ENCODE measurements at regions of chr14 and their contacts with region 1.

Region 1: GRCh38 chr14:102774391-102775153 is 2.7 kb upstream of the TRAF3 start:
- DNase-seq: peak; percentile 81
- H3K4me3 Mint-ChIP-seq: peak overlapping the region; percentile 41
- H3K27ac Mint-ChIP-seq: peak overlapping the region; percentile 86
- H3K4me1 Mint-ChIP-seq: peaks cover 31% of the 10 kb centered on the region
- H3K27me3 Mint-ChIP-seq: no peaks in the 10 kb centered on the region

Region 2: DNA sequence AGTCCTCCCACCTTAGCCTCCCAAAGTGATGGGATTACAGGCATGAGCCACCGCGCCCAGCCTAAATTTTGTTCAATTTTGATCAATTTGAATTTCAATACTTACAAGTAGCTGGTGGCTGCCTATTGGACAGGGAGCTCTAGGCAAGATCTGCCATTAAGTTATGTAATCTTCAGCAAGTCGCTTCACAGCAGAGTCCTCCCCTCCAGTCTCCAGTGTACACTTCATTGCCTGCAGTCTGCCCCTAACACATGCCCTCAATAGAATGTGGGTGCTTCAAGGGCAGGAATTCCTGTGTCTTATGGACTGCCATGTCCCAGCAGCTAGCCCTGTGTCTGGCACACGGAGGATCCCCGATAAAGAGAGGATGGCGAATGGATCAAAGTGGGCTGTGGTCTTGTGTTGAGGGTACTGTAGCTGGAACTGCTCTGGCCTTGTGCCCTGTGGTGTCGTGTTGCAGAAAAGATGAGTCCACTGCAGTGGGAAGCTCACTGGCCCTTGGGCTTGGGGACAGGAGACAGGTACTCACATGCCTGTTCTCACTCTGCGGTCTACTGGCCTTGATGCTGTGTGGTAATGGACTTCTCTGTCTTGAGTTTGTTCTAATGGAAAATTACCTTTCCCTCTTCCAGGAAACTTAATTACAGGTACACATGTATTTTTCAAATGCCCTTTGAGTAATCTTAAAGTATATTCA is 344.2 kb before region 1 on chr14:
- CTCF ChIA-PET with region 1: no interaction called
- intact Hi-C with region 1: no loop called
- DNase-seq: no peak
- H3K4me3 Mint-ChIP-seq: no peak overlapping the region
- H3K27ac Mint-ChIP-seq: no peak overlapping the region
- H3K4me1 Mint-ChIP-seq: no peaks in the 10 kb centered on the region
- H3K27me3 Mint-ChIP-seq: no peaks in the 10 kb centered on the region

Region 3: GRCh38 chr14:102481791-102482238 is 292.8 kb before region 1 on chr14:
- CTCF ChIA-PET with region 1: no interaction called
- intact Hi-C with region 1: no loop called
- DNase-seq: no peak
- H3K4me3 Mint-ChIP-seq: no peak overlapping the region
- H3K27ac Mint-ChIP-seq: no peak overlapping the region
- H3K4me1 Mint-ChIP-seq: peaks cover 3% of the 10 kb centered on the region
- H3K27me3 Mint-ChIP-seq: no peaks in the 10 kb centered on the region

Region 4: GRCh38 chr14:102524466-102525218 is 249.9 kb before region 1 on chr14:
- CTCF ChIA-PET with region 1: no interaction called
- intact Hi-C with region 1: loop called (anchors 1 kb)
- DNase-seq: peak; percentile 97
- H3K4me3 Mint-ChIP-seq: peak overlapping the region; percentile 83
- H3K27ac Mint-ChIP-seq: peak overlapping the region; percentile 56
- H3K4me1 Mint-ChIP-seq: peaks cover 28% of the 10 kb centered on the region
- H3K27me3 Mint-ChIP-seq: no peaks in the 10 kb centered on the region

Region 5: DNA sequence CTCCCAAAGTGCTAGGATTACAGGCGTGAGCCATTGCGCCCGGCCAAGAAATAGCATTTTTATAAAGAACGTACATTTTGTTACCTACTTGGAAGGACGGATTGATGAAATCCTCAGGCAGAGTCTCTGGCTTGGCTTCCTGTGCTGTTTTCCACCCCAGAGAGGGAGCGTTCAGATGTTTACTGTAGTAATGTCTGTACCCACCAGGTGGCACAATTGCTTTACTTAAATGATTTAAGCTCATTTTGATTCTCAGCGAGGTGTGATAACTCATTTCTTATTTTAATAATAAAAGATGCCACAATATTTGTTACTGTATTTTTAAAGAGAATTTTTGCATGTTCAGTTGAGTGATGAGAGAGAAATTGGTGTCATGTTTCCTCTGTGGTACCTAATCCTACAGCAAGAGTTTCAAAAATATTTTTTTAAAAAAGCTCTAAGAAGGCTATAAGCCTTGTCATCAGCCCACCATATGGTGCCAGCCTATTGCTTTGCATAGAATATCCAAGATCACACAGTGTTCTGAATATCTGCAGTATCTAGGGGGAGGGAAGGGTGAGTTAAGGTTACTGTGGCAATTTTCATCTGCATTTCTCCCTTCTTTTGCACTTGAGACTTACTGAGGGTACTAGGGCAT is 79.9 kb before region 1 on chr14:
- CTCF ChIA-PET with region 1: interaction called, 7 read pairs
- intact Hi-C with region 1: loop called (anchors 2 kb)
- DNase-seq: peak; percentile 78
- H3K4me3 Mint-ChIP-seq: no peak overlapping the region
- H3K27ac Mint-ChIP-seq: no peak overlapping the region
- H3K4me1 Mint-ChIP-seq: peaks cover 19% of the 10 kb centered on the region
- H3K27me3 Mint-ChIP-seq: no peaks in the 10 kb centered on the region

Region 6: DNA sequence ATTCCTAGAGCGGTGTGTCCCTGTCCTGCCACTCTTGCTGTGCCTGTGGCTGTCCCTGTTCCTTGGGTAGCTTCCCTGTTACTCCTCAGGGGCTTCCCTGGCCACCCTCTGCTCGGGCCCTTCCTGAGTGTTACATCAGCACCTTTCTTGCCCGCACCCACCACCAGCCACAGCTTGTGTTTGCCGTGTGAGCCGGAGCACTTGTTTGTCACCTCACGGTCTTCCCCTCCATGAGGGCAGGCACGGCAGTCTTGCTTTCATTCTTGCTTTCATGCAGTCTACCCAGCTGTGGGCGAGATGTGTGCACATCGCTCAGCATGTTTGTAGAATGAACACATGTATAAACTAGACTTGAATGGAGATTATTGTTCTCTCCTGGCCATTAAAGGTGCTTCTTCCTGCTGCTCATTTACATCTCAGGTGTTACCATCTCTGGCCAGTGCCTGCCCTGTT is 44.6 kb after region 1 on chr14:
- CTCF ChIA-PET with region 1: interaction called, 5 read pairs
- intact Hi-C with region 1: loop called (anchors 1 kb)
- DNase-seq: peak; percentile 93
- H3K4me3 Mint-ChIP-seq: peak overlapping the region; percentile 44
- H3K27ac Mint-ChIP-seq: peak overlapping the region; percentile 93
- H3K4me1 Mint-ChIP-seq: peaks cover 88% of the 10 kb centered on the region
- H3K27me3 Mint-ChIP-seq: no peaks in the 10 kb centered on the region

Region 7: DNA sequence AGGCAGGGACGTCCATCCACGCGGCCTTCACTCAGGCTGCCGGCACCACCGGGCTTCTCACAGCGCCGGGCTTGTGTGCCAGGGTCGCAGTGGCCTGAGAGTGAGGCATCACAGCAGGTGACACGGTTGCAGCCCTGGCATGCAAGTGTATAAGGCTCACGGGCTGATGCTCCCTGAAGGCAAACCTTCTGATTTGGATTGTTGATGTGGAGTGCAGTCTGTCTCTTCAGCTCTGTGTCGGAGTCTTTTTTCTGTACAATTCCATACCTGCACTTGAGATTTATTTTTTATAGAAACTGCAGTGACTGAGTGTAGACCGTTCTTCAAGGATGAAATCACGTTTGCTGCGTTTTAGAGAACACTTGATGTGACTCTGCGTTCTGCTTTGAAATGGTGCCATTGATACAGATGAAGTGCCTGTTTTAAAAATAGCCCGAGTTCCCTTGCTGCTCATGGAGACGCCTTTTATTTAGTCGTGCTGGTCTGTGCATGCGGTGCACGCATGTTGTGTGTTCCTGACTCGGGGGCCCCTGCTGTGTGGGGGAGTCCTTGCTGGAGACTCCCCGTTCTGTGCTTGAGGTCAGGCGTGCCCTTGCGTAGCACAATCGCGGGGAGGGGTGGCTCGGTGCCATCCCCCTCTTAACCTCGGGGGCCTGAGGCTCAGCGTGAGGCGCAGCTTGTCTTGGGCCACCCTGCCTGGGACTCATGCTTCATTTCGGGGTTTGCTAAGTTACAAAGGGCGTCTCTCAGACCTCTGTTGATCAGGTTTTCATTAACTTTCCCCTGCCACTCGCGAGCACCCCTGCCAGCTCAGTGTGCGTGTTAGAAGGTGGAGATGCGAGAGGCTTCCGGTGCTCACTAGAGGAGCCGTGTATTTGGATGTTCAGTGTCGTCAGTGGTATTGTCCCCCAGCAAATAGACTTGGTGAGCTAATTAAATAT is 126.3 kb after region 1 on chr14:
- CTCF ChIA-PET with region 1: no interaction called
- intact Hi-C with region 1: loop called (anchors 5 kb)
- DNase-seq: peak; percentile 41
- H3K4me3 Mint-ChIP-seq: no peak overlapping the region
- H3K27ac Mint-ChIP-seq: peak overlapping the region; percentile 80
- H3K4me1 Mint-ChIP-seq: peaks cover 32% of the 10 kb centered on the region
- H3K27me3 Mint-ChIP-seq: no peaks in the 10 kb centered on the region